HepG2 (cell line): ENCODE measurements at regions of chr14 and their contacts with region 1.

Region 1: DNA sequence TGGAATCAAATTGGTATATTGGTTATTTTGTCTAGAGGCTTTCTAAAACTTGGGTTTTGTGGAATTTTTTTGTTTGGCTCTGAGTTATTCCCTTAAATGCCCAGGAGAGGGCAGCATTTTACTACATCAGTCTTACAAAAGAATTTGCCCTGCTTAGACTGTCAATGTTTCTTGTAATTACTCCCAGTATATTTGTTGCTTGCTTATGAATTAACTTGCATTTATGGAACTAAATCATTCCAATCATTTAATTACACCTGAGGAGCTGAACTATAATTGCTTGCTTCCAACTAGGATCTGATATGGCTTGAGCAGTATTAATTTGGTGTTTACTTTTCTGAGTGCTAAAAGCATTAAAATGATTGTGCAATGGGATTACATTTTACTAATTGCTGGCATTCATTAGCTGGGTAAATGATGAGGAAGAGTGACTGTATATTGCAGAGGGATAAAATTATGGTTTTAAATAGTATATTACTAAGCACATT is 48.7 kb downstream of the MIPOL1 start:
- DNase-seq: peak; percentile 86
- ATAC-seq: peak; percentile 79
- H3K4me3 ChIP-seq: no peak overlapping the region
- H3K27ac ChIP-seq: no peak overlapping the region
- H3K4me1 ChIP-seq: peaks cover 33% of the 10 kb centered on the region
- H3K27me3 ChIP-seq: no peaks in the 10 kb centered on the region
- CTCF ChIP-seq: peak; percentile 88
- EP300 ChIP-seq: peak in 1 of 2 experiments; percentile 37; a peak in 1 of 4 replicates
- POLR2A ChIP-seq: no peak
- RAD21 ChIP-seq: peak; percentile 93

Region 2: DNA sequence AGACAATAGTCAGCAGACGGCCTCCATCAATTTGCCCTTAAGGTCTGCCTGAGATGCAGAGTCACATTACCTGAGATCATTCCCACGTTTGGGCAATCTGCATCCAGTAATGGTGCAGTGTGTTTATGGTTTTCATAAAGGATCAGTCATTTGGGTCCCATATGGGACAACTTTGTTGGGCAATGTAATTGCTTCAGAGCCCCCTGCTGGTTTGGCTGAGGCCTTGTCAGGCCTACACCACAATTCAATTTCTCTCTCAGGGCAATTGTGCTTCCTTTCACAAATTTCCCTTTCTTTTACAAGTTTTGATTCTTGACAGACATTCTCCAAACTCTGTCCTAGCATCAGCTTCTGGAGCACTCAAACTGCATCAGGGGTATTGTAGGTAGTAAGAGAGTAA is 770.0 kb after region 1 on chr14:
- CTCF ChIA-PET with region 1: no interaction called
- POLR2A ChIA-PET with region 1: no interaction called
- in situ Hi-C with region 1: no loop called
- intact Hi-C with region 1: loop called (anchors 10 kb)
- DNase-seq: peak; percentile 41
- ATAC-seq: peak; percentile 95
- H3K4me3 ChIP-seq: no peak overlapping the region
- H3K27ac ChIP-seq: no peak overlapping the region
- H3K4me1 ChIP-seq: no peaks in the 10 kb centered on the region
- H3K27me3 ChIP-seq: no peaks in the 10 kb centered on the region
- CTCF ChIP-seq: peak; percentile 55
- EP300 ChIP-seq: no peak
- POLR2A ChIP-seq: no peak
- RAD21 ChIP-seq: no peak